ENCODE measurements at regions of chr17 and their contacts with region 1.

Region 1: DNA sequence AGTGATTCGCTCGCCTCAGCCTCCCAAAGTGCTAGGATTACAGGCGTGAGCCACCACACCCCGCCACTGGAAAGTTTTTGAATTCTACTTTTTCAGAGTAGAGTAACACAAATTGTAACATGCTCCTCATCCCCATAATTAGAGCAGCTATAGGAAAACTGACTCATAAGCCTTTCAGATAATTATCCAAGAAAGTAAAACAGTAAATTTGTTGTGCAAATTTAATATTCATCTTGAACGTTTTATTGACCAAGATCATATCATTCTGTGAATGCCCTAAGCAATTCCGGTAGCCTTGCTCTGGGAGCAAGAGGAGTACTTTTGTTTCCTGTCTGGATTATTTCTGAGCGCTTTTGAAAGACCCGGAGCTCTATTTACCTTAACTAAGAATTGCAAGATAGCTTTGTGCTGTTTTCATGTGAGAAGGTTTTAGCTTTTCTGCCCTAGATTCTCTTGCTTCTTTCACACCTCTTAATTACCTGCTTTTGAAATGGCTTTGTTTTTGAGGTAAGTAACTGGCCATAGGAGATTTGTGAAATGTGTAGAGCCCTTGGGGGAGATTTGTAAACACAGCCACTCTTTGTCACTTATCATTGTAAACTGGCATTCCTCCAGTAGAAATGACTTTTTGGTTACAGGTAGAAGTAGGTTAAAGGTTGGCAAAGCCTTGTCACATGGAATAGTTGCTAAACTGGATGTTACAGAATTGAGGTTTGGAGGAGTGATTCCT is 34.5 kb upstream of the YPEL2 start:
- DNase-seq: peak; percentile 17
- H3K4me3 Mint-ChIP-seq: peak overlapping the region; percentile 45
- H3K27ac Mint-ChIP-seq: peak overlapping the region; percentile 96
- H3K4me1 Mint-ChIP-seq: peaks cover 11% of the 10 kb centered on the region
- H3K27me3 Mint-ChIP-seq: no peaks in the 10 kb centered on the region
- CTCF ChIP-seq: no peak

Region 2: GRCh38 chr17:59220376-59221158 is 76.4 kb before region 1 on chr17 and contains the start of gene GDPD1:
- CTCF ChIA-PET with region 1: interaction called, 3 read pairs
- intact Hi-C with region 1: loop called (anchors 5 kb)
- DNase-seq: peak; percentile 94
- H3K4me3 Mint-ChIP-seq: peak within 1 kb of the TSS; percentile 94
- H3K27ac Mint-ChIP-seq: peak within 1 kb of the TSS; percentile 88
- H3K4me1 Mint-ChIP-seq: no peaks in the 10 kb centered on the region
- H3K27me3 Mint-ChIP-seq: no peaks in the 10 kb centered on the region
- CTCF ChIP-seq: peak; percentile 57
- total RNA-seq, gene GDPD1: 2.6 and 3.4 TPM in 2 replicates

Region 3: DNA sequence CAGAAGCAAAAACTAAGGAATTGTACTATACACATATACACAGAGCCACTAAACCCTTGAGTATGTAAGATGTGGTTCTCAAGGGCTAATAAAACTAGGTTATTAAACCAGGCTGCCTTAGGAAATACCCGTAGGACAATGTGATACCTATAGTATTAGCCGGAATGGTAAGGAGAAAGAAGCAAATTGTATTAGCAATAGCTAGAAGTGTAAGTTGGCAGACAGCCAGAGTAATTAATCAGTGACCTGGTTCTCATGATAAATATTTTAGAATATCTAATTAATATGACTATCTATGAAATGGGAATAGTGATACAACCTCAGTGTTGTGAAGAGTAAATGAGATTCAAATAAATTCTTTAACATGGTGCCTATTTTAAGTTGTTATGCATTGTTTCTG is 58.0 kb before region 1 on chr17:
- CTCF ChIA-PET with region 1: no interaction called
- intact Hi-C with region 1: no loop called
- DNase-seq: no peak
- H3K4me3 Mint-ChIP-seq: no peak overlapping the region
- H3K27ac Mint-ChIP-seq: no peak overlapping the region
- H3K4me1 Mint-ChIP-seq: no peaks in the 10 kb centered on the region
- H3K27me3 Mint-ChIP-seq: no peaks in the 10 kb centered on the region
- CTCF ChIP-seq: no peak